Caco-2 (cell line): ENCODE measurements at regions of chr2 and their contacts with region 1.

Region 1: DNA sequence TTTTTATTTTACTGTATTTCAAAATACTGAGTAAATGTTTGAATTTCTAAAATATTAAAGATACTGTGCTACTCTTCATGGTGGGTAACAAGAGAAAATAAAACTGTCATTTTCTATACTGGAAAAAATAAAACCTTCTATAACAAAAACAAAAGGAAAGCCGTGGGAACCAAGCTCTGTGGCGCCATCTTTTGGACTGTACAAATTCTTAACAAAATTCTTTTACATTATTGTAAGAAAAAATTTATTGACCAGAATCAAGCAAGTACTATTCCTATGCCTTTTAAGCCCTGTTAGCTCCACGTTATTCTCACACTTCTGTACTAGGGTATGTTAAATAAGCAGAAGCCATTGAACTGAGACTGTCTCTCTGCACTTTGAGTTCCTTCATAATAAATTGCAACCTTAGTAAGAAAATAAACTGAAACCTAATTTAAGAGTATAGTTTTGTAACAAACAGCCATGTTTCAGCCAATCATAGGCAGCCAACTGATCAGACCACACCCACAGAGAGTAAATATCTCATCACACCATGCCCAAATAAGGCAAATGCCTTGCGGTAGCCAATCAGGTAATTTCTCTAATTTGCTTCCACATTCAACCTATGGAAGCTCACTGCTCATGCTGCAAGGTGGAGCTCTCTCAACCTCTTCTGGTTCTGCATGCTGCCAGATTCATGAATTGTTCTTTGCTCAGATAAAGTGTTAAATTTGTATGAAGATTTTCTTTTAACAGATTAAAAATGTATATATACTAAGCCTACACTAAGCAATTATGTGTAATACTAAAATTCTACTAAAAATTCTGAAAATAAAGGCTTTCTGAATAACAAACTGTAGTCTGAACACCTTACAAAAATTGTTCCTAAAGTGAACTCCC is 42.2 kb downstream of the HIBCH start:
- DNase-seq: peak in 1 of 2 experiments; percentile 23
- H3K4me3 ChIP-seq: no peak overlapping the region
- H3K4me3 Mint-ChIP-seq: no peak overlapping the region
- H3K27ac Mint-ChIP-seq: no peak overlapping the region
- H3K4me1 ChIP-seq: peaks cover 27% of the 10 kb centered on the region
- H3K4me1 Mint-ChIP-seq: peaks cover 23% of the 10 kb centered on the region
- H3K27me3 ChIP-seq: no peaks in the 10 kb centered on the region
- H3K27me3 Mint-ChIP-seq: no peaks in the 10 kb centered on the region
- CTCF ChIP-seq: peak; percentile 31 to 39

Region 2: GRCh38 chr2:190149908-190150307 is 127.6 kb before region 1 on chr2:
- CTCF ChIA-PET with region 1: no interaction called
- POLR2A ChIA-PET with region 1: no interaction called
- intact Hi-C with region 1: no loop called
- DNase-seq: no peak
- H3K4me3 ChIP-seq: no peak overlapping the region
- H3K4me3 Mint-ChIP-seq: no peak overlapping the region
- H3K27ac Mint-ChIP-seq: no peak overlapping the region
- H3K4me1 ChIP-seq: no peaks in the 10 kb centered on the region
- H3K4me1 Mint-ChIP-seq: no peaks in the 10 kb centered on the region
- H3K27me3 ChIP-seq: no peaks in the 10 kb centered on the region
- H3K27me3 Mint-ChIP-seq: no peaks in the 10 kb centered on the region
- CTCF ChIP-seq: no peak

Region 3: GRCh38 chr2:190202604-190203003 is 74.9 kb before region 1 on chr2:
- CTCF ChIA-PET with region 1: no interaction called
- POLR2A ChIA-PET with region 1: no interaction called
- intact Hi-C with region 1: loop called (anchors 5 kb)
- DNase-seq: peak in 1 of 2 experiments; percentile 21
- H3K4me3 ChIP-seq: no peak overlapping the region
- H3K4me3 Mint-ChIP-seq: no peak overlapping the region
- H3K27ac Mint-ChIP-seq: peak overlapping the region; percentile 42
- H3K4me1 ChIP-seq: peaks cover 26% of the 10 kb centered on the region
- H3K4me1 Mint-ChIP-seq: peaks cover 26% of the 10 kb centered on the region
- H3K27me3 ChIP-seq: no peaks in the 10 kb centered on the region
- H3K27me3 Mint-ChIP-seq: no peaks in the 10 kb centered on the region
- CTCF ChIP-seq: no peak

Region 4: GRCh38 chr2:190207929-190208328 is 69.5 kb before region 1 on chr2:
- CTCF ChIA-PET with region 1: no interaction called
- POLR2A ChIA-PET with region 1: interaction called, 10 read pairs
- intact Hi-C with region 1: loop called (anchors 5 kb)
- DNase-seq: no peak
- H3K4me3 ChIP-seq: no peak overlapping the region
- H3K4me3 Mint-ChIP-seq: no peak overlapping the region
- H3K27ac Mint-ChIP-seq: no peak overlapping the region
- H3K4me1 ChIP-seq: peaks cover 4% of the 10 kb centered on the region
- H3K4me1 Mint-ChIP-seq: peaks cover under 1% of the 10 kb centered on the region
- H3K27me3 ChIP-seq: no peaks in the 10 kb centered on the region
- H3K27me3 Mint-ChIP-seq: no peaks in the 10 kb centered on the region
- CTCF ChIP-seq: no peak